ENCODE measurements at regions of chr7 and their contacts with region 1.

Region 1: DNA sequence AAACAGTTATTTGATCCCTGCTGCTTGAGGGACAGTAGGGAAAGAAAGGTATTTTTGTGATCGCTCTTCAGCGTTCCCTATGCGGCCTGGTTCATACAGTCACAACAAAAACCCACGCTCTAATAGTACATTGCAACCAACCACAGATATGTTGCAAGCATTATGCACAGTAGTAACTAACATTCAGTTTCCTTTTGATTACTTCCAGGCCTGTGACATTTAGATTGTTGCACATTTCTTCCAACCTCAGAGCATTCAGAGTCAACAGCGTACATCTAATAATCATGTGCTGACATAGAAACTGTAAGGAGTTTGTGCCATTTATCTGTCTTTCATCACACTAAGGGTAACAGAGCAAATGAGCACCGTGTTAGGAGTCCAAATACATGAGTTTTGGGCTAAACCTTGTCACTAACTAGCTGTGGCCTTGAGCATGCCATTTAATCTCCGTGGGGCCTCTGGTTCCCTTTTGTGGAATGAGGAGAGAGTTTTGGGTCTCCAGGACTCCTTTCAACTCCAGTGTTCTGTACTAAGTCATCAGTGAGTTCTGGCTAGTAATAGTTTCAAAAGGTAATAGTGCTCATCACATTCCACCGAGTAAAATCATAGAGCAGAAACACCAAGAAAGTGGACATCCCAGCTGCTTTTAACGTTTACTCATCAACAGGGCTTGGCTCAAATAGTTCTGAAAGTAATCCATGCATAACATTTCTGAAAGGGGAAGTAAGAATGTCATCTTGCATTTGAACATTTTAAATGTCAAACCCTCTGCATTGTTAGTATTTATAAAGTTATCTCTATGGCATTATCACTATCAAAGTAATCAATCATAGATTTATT is 99.0 kb upstream of the FZD1 start:
- DNase-seq: no peak

Region 2: GRCh38 chr7:90910136-90910535 is 255.1 kb before region 1 on chr7:
- intact Hi-C with region 1: loop called in 1 of 2 experiments (anchors 5 kb)
- DNase-seq: no peak

Region 3: DNA sequence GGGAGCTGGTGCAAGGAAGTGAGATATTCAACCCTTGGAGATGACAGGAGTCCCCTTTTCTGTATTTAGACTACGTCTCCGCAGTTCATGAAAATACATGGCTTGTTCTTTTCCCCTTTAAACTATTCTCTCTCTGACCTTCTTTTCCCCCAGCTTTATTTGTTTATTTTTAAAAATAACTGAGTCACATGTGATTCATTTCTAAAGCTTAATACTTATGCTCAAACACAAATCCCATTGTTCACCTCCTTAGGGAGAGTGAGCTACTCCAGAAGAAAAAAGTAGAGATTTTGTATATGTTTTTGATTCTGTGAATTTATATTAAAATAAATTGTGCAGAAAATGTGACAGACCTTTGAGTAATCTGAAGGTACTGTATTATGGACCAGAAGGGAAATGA is 63.1 kb after region 1 on chr7:
- intact Hi-C with region 1: loop called in 1 of 2 experiments (anchors 2 kb)
- DNase-seq: no peak

Region 4: DNA sequence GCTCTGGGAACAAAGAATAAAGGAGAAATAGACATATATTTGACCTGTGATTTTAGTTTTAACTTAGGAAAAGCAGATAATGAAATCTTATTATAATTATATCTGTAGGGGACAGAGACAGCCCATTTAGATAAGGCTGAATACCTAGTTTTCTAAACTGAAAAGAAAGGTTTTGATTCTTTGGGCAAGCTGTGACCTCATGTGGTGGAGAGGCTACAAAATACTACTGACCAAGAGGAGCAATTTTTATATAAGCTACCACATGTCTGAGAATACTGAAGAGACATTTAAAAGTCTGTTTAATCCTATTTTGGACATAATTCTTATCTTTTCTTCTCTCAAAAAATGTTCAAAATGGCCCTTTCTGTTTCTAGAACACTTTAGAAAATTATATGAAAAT is 444.3 kb after region 1 on chr7:
- intact Hi-C with region 1: no loop called
- DNase-seq: no peak

Measured in posterior vena cava (tissue), 2 donors.